ENCODE measurements at regions of chr2 and their contacts with region 1.

Region 1: DNA sequence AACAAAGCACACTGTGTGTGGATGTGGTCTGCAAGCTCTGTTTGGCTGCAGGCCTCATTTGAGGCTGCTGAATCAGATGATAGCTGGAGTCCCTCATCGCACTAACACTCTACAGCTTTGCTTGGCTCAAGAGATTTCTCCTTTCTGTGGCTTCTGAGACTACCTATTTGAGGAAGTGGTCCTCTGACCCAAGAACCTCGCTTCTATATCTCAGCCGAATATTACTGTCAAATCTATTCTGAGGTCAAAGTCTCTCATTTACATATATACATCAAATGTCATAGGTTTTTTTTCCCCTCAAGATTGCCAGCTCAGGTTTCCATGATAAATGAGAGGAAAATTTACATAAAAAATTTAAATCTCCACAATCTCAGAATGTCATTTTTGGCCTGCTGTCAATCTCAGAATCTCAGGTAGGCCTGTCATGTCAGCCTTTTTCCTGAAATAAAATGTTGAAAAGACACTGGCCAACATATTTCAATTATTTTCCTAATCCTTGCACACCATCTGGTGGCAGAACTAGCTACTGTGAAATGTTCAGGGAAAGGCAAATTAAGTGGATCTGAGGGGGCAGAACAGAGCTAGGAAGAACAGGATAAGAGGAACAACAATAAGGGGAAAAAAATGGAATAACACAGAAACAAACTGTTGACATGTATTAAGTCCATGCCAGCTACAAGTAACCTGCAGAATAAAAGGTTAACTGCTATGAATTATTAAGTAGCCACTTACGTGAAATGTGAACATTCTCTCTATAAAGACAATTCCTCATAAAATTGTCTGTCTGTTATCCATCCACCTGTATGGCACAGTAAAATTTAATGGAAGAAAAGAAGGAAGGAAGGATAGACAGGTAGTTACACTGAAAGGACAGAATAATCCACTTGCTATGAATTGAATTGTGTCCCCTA is 39.3 kb downstream of the AP1S3 start:
- DNase-seq: peak; percentile 73
- H3K4me3 ChIP-seq: no peak overlapping the region
- H3K27ac ChIP-seq: no peak overlapping the region
- H3K4me1 ChIP-seq: peaks cover 4% of the 10 kb centered on the region
- H3K27me3 ChIP-seq: no peaks in the 10 kb centered on the region
- CTCF ChIP-seq: peak; percentile 46 to 47
- POLR2A ChIP-seq: no peak

Region 2: GRCh38 chr2:223306371-223306770 is 491.7 kb before region 1 on chr2:
- CTCF ChIA-PET with region 1: interaction called, 24 read pairs
- POLR2A ChIA-PET with region 1: no interaction called
- dilution Hi-C with region 1: no loop called
- intact Hi-C with region 1: no loop called
- DNase-seq: peak; percentile 12
- H3K4me3 ChIP-seq: no peak overlapping the region
- H3K27ac ChIP-seq: no peak overlapping the region
- H3K4me1 ChIP-seq: no peaks in the 10 kb centered on the region
- H3K27me3 ChIP-seq: no peaks in the 10 kb centered on the region
- CTCF ChIP-seq: peak; percentile 15 to 40
- POLR2A ChIP-seq: no peak

Region 3: GRCh38 chr2:223404616-223405015 is 393.4 kb before region 1 on chr2:
- CTCF ChIA-PET with region 1: no interaction called
- POLR2A ChIA-PET with region 1: no interaction called
- dilution Hi-C with region 1: no loop called
- intact Hi-C with region 1: no loop called
- DNase-seq: no peak
- H3K4me3 ChIP-seq: no peak overlapping the region
- H3K27ac ChIP-seq: no peak overlapping the region
- H3K4me1 ChIP-seq: no peaks in the 10 kb centered on the region
- H3K27me3 ChIP-seq: no peaks in the 10 kb centered on the region
- CTCF ChIP-seq: no peak
- POLR2A ChIP-seq: no peak

Region 4: GRCh38 chr2:223549215-223549614 is 248.9 kb before region 1 on chr2:
- CTCF ChIA-PET with region 1: interaction called, 5 read pairs
- POLR2A ChIA-PET with region 1: no interaction called
- dilution Hi-C with region 1: no loop called
- intact Hi-C with region 1: loop called (anchors 5 kb)
- DNase-seq: peak; percentile 88
- H3K4me3 ChIP-seq: no peak overlapping the region
- H3K27ac ChIP-seq: no peak overlapping the region
- H3K4me1 ChIP-seq: peaks cover 10% of the 10 kb centered on the region
- H3K27me3 ChIP-seq: peaks cover 0 to 22% of the 10 kb centered on the region in 2 experiments
- CTCF ChIP-seq: no peak
- POLR2A ChIP-seq: peak; percentile 47

Region 5: GRCh38 chr2:223674998-223675609 is 123.0 kb before region 1 on chr2:
- CTCF ChIA-PET with region 1: interaction called, 136 read pairs
- POLR2A ChIA-PET with region 1: no interaction called
- dilution Hi-C with region 1: no loop called
- intact Hi-C with region 1: loop called (anchors 1 kb)
- DNase-seq: peak; percentile 69
- H3K4me3 ChIP-seq: no peak overlapping the region
- H3K27ac ChIP-seq: no peak overlapping the region
- H3K4me1 ChIP-seq: no peaks in the 10 kb centered on the region
- H3K27me3 ChIP-seq: no peaks in the 10 kb centered on the region
- CTCF ChIP-seq: peak; percentile 60 to 69
- POLR2A ChIP-seq: no peak

Region 6: DNA sequence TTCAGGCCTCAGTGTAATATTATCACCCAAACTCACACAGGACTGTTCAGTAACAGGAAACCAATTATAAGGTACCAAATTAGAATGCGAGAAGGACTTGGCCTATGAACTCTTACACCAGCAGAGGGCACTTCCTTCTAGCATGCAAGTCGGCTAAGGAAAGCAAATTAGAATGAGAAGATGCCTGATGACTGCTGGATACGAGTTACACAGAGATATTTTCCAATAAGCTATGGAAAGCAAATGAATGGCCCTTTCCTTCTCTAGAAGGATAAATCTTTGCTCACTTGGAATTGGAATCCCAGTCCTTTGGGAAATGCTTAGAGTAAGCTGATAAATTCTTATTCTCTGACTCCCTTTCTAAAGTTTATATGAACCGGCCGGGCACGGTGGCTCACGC is 70.5 kb before region 1 on chr2:
- CTCF ChIA-PET with region 1: interaction called, 61 read pairs
- POLR2A ChIA-PET with region 1: no interaction called
- dilution Hi-C with region 1: no loop called
- intact Hi-C with region 1: loop called (anchors 1 kb)
- DNase-seq: peak; percentile 60
- H3K4me3 ChIP-seq: no peak overlapping the region
- H3K27ac ChIP-seq: peak overlapping the region; percentile 14
- H3K4me1 ChIP-seq: peaks cover 30% of the 10 kb centered on the region
- H3K27me3 ChIP-seq: no peaks in the 10 kb centered on the region
- CTCF ChIP-seq: peak; percentile 38 to 48
- POLR2A ChIP-seq: no peak

Region 7: DNA sequence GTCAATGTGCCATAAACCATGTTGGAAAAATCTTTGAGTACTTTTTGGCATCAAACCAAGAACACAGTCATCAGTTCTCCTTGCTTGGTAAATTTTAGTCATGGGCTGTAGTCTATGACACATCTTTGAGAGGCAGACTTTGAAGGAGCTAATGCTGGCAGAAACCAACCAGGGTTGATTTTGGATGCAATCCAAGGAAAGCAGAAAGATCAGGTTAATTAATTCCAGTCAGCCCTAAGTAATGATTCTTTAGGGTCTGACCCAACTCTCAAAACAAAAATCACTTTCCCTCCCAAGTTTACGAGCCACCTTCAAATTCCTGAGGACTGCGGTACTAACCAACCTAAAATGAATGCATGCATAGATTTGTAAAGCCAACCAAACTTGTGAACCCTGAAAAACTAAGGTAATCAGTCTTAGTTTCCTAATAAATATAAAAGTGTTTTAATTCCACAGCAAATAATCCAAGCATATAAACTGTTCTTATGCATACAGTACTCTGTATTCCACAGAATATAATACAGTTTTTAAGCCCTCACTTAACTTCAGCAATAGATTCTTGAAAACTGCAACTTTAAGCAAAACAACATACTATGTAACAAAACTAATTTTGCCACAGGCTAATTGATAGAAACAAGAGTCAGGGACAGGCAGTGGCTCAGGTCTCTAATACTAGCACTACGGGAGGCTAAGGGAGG is 17.3 kb after region 1 on chr2:
- CTCF ChIA-PET with region 1: interaction called, 14 read pairs
- POLR2A ChIA-PET with region 1: no interaction called
- dilution Hi-C with region 1: no loop called
- intact Hi-C with region 1: no loop called
- DNase-seq: peak; percentile 97
- H3K4me3 ChIP-seq: no peak overlapping the region
- H3K27ac ChIP-seq: peak overlapping the region; percentile 49
- H3K4me1 ChIP-seq: peaks cover 25% of the 10 kb centered on the region
- H3K27me3 ChIP-seq: no peaks in the 10 kb centered on the region
- CTCF ChIP-seq: no peak
- POLR2A ChIP-seq: no peak

Region 8: GRCh38 chr2:224160917-224161316 is 362.9 kb after region 1 on chr2:
- CTCF ChIA-PET with region 1: no interaction called
- POLR2A ChIA-PET with region 1: no interaction called
- dilution Hi-C with region 1: no loop called
- intact Hi-C with region 1: no loop called
- DNase-seq: no peak
- H3K4me3 ChIP-seq: no peak overlapping the region
- H3K27ac ChIP-seq: no peak overlapping the region
- H3K4me1 ChIP-seq: no peaks in the 10 kb centered on the region
- H3K27me3 ChIP-seq: no peaks in the 10 kb centered on the region
- CTCF ChIP-seq: no peak
- POLR2A ChIP-seq: no peak

Measured in endothelial cell of umbilical vein (primary cell).